Mammary epithelial cell (primary cell): ENCODE measurements at regions of chr6 and their contacts with region 1.

Region 1: GRCh38 chr6:11585426-11586016 is 48.0 kb downstream of the TMEM170B start:
- DNase-seq: peak; percentile 31
- H3K4me3 ChIP-seq: no peak overlapping the region
- H3K27ac ChIP-seq: no peak overlapping the region
- H3K4me1 ChIP-seq: no peaks in the 10 kb centered on the region
- H3K27me3 ChIP-seq: peaks cover 3% of the 10 kb centered on the region
- CTCF ChIP-seq: peak; percentile 64 to 66

Region 2: DNA sequence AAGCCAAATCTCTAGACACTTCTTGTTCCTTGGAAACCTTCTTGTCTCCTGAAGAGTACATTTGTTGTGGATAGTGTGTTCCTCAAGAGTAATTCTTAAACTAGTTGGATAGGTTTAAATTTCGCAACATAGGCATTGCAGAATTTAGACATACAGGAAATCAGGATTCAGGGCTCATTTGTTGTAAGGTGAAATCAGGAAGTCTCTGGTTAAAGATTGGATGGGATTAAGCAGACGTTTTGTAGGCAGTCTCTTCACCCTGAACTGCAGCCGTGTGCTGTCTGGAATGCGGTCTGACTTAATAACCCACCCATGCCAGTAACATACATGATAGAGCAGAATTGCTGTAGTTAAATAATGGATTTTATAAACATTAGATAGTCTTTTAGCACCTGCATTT is 448.2 kb after region 1 on chr6:
- CTCF ChIA-PET with region 1: no interaction called
- dilution Hi-C with region 1: no loop called
- in situ Hi-C with region 1: no loop called
- intact Hi-C with region 1: loop called (anchors 5 kb)
- DNase-seq: peak; percentile 81
- H3K4me3 ChIP-seq: no peak overlapping the region
- H3K27ac ChIP-seq: peak overlapping the region; percentile 9
- H3K4me1 ChIP-seq: peaks cover 40% of the 10 kb centered on the region
- H3K27me3 ChIP-seq: no peaks in the 10 kb centered on the region
- CTCF ChIP-seq: no peak

Region 3: GRCh38 chr6:12233693-12234571 is 648.4 kb after region 1 on chr6:
- CTCF ChIA-PET with region 1: no interaction called
- dilution Hi-C with region 1: no loop called
- in situ Hi-C with region 1: loop called in 1 of 2 experiments (anchors 10 kb)
- intact Hi-C with region 1: loop called (anchors 1 kb)
- DNase-seq: peak; percentile 82
- H3K4me3 ChIP-seq: no peak overlapping the region
- H3K27ac ChIP-seq: no peak overlapping the region
- H3K4me1 ChIP-seq: peaks cover 5% of the 10 kb centered on the region
- H3K27me3 ChIP-seq: no peaks in the 10 kb centered on the region
- CTCF ChIP-seq: peak; percentile 74 to 84

Region 4: DNA sequence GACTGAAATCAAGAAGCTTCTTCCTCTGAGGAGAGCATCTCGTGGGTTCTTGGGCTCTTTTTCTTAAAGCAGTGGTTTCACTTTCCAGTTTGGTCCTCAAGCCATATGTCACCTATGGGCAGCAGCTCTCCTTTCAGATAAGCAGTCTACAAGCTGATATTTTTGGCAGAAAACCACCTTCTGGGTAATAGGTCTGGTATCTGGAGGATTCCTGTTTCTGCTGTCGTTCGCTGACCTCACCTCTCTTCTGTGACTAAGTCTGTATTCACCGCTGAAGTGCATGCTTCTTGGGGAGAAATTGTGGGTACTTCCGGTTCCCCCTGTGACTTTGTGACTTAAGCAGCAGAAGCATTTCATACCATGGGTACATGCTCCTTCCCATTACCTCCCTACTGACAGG is 898.2 kb after region 1 on chr6:
- CTCF ChIA-PET with region 1: no interaction called
- dilution Hi-C with region 1: no loop called
- in situ Hi-C with region 1: no loop called
- intact Hi-C with region 1: loop called (anchors 10 kb)
- DNase-seq: peak; percentile 91
- H3K4me3 ChIP-seq: no peak overlapping the region
- H3K27ac ChIP-seq: peak overlapping the region; percentile 74
- H3K4me1 ChIP-seq: peaks cover 30% of the 10 kb centered on the region
- H3K27me3 ChIP-seq: no peaks in the 10 kb centered on the region
- CTCF ChIP-seq: no peak